ENCODE measurements at regions of chr3 and their contacts with region 1.

Region 1: DNA sequence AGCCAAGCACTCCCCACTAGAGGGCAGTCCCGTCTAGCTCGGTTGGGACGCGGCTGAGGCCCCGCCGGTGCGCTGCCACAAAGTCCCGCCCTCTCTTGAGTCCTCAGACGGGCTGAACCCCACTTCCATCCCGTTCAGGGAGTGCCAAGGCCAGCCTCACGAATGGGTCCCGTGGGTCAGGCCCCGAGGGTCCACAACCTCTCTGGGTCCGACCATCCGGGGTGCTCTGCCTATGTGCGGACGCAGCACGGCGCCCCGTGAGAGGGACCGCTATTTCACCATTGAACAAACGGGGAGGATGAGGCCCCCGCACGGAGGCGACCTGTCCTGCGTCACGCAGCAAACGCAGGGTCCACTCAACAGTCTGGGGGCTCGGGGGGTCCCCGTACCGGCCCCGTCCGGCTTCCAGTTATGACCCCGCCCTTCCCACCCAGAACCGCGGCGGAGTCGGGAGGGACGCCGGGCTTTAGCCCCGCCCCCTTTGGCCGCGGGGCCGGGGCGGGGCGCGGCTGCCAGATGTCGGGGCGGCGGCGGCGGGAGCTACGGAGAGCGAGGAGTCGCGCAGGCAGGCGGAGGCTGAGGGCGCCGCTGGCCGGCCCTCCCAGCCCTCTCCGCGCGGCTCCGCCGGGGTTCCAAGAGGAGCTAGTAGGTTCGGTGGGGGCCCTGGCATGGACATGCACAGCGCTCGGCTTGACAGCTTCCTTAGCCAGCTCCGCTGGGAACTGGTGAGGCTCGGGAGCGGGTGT is at the start of gene INKA1:
- DNase-seq: peak; percentile 77 to 89 (median 87)
- ATAC-seq: peak; percentile 93
- H3K4me3 ChIP-seq: peak within 1 kb of the TSS; percentile 89
- H3K4me3 Mint-ChIP-seq: peak within 1 kb of the TSS; percentile 82 to 95 (median 90)
- H3K27ac ChIP-seq: peak within 1 kb of the TSS; percentile 84
- H3K27ac Mint-ChIP-seq: peak within 1 kb of the TSS; percentile 80 to 96 (median 91)
- H3K4me1 ChIP-seq: peaks cover 11 to 41% of the 10 kb centered on the region in 2 donors
- H3K4me1 Mint-ChIP-seq: peaks cover 23 to 47% (median 41%) of the 10 kb centered on the region in 7 donors
- H3K27me3 ChIP-seq: no peaks in the 10 kb centered on the region
- H3K27me3 Mint-ChIP-seq: peaks cover 0 to 20% (median 0%) of the 10 kb centered on the region in 5 donors
- total RNA-seq, gene INKA1: 0.65 to 2.2 (median 1.8) TPM

Region 2: DNA sequence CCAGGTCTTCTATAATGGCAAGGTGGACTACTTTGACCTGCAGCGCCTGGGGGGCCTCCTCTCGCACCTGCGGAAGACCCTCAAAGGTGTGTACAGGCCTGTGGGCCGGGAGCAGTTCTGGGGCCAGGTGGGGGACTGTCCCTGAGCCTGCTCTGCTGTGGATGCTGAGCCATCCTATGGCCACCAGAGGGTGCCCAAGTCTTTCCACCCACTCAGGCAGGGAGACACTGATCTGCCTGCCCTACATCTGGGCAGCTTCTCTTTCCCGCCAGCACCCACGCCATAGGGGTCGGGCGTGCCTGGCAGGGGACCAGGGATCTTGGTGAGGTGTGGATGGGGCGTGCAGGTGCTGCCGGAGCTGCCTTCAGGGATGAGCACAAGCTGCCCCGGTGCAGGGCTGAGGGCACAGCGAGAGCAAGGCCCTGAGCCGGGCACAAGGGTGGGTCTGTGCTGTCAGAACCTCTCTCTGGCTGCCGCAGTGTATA is 99.4 kb before region 1 on chr3:
- CTCF ChIA-PET with region 1: interaction called, 3 read pairs
- POLR2A ChIA-PET with region 1: no interaction called
- intact Hi-C with region 1: loop called (anchors 1 kb)
- DNase-seq: peak; percentile 44 to 74 (median 65)
- ATAC-seq: peak; percentile 94
- H3K4me3 ChIP-seq: no peak overlapping the region
- H3K4me3 Mint-ChIP-seq: no peak overlapping the region
- H3K27ac ChIP-seq: no peak overlapping the region
- H3K27ac Mint-ChIP-seq: peak overlapping the region in 2 of 9 donors; percentile 8 to 52
- H3K4me1 ChIP-seq: no peaks in the 10 kb centered on the region
- H3K4me1 Mint-ChIP-seq: peaks cover 0 to 7% (median 0%) of the 10 kb centered on the region in 7 donors
- H3K27me3 ChIP-seq: no peaks in the 10 kb centered on the region
- H3K27me3 Mint-ChIP-seq: no peaks in the 10 kb centered on the region

Region 3: DNA sequence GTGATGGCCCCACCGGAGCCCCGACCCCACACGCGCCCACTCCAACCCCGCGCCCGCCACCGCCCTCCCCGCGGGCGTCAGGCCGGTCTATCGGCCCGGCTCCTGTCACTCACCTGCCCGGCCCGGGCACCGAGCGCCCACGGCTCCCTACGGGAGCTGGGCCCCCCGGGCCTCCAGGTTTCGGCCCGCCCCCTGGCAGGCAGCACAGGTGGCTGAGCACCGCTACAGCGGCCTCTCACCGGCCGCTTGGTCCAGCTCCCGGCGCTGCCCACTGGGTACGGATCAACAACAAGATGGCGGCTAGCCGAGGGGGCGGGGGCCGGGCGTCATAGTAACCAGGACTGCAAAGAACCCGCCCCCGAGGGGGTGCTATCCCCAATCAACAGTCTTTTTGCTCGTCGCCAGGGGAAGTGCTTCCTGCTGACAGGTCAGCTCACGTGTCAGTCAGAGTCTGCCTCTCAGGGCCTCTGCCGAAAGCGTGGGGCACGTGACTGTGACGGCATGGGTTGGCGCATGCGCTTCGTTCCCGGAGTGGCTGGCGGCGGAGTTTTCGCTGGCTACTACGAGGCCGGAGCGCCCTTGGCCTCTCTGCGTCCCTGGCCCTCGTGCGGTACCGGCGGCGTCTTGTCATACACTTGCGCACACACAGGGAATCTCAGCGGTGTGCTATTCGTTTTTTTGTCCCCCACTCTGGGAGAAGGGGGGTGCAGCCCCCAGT is 16.5 kb before region 1 on chr3 and contains the start of gene IP6K1:
- CTCF ChIA-PET with region 1: interaction called, 10 read pairs
- POLR2A ChIA-PET with region 1: interaction called, 25 read pairs
- intact Hi-C with region 1: loop called (anchors 1 kb)
- DNase-seq: peak; percentile 90 to 100 (median 99)
- ATAC-seq: peak; percentile 99
- H3K4me3 ChIP-seq: peak within 1 kb of the TSS; percentile 80
- H3K4me3 Mint-ChIP-seq: peak within 1 kb of the TSS; percentile 91 to 99 (median 94)
- H3K27ac ChIP-seq: peak within 1 kb of the TSS; percentile 95
- H3K27ac Mint-ChIP-seq: peak within 1 kb of the TSS; percentile 96 to 100 (median 99)
- H3K4me1 ChIP-seq: peaks cover 9 to 12% of the 10 kb centered on the region in 2 donors
- H3K4me1 Mint-ChIP-seq: peaks cover 15 to 50% (median 32%) of the 10 kb centered on the region in 7 donors
- H3K27me3 ChIP-seq: no peaks in the 10 kb centered on the region
- H3K27me3 Mint-ChIP-seq: peaks cover 0 to 6% (median 0%) of the 10 kb centered on the region in 5 donors
- total RNA-seq, gene IP6K1: 41.8 to 57.0 (median 47.3) TPM

Region 4: DNA sequence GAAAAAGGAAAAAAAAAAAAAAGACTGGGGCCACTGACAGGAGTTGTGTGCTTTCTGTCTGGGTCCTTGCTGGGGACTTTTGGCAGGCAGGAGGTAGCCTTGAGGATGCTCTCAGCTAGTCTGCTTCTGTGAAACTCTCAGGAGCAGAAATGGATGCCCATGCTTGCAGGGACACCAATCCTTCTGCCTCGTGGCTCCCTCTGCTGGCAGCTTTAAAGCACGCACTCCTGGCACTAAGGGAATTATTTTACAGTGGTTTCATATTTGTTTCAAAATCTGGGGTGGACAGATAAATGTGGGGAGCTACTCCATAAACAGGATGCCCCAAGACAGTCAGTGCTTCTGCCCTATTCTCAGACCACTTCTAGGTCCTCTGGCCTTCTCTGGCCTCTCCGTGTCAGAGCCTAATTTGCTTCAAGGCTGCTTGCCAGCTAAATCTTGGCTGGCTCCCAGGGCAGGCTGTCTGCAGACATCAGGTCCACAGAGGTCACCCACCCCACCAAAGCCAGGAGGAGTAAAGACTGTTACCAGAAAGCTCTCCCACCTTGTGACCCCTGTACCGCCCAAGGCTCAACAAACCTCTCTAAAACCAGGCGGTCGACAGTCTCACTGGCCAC is 36.4 kb after region 1 on chr3:
- CTCF ChIA-PET with region 1: interaction called, 181 read pairs
- POLR2A ChIA-PET with region 1: interaction called, 59 read pairs
- intact Hi-C with region 1: loop called (anchors 1 kb)
- DNase-seq: peak; percentile 64 to 84 (median 75)
- ATAC-seq: peak; percentile 97
- H3K4me3 ChIP-seq: no peak overlapping the region
- H3K4me3 Mint-ChIP-seq: no peak overlapping the region
- H3K27ac ChIP-seq: no peak overlapping the region
- H3K27ac Mint-ChIP-seq: peak overlapping the region in 1 of 9 donors; percentile 3
- H3K4me1 ChIP-seq: no peaks in the 10 kb centered on the region
- H3K4me1 Mint-ChIP-seq: peaks cover 0 to 9% (median 0%) of the 10 kb centered on the region in 7 donors
- H3K27me3 ChIP-seq: no peaks in the 10 kb centered on the region
- H3K27me3 Mint-ChIP-seq: no peaks in the 10 kb centered on the region

Region 5: GRCh38 chr3:49906004-49906743 is 103.3 kb after region 1 on chr3:
- CTCF ChIA-PET with region 1: interaction called, 7 read pairs
- POLR2A ChIA-PET with region 1: no interaction called
- intact Hi-C with region 1: loop called (anchors 1 kb)
- DNase-seq: peak; percentile 16 to 60 (median 39)
- ATAC-seq: peak; percentile 53
- H3K4me3 ChIP-seq: no peak overlapping the region
- H3K4me3 Mint-ChIP-seq: peak overlapping the region; percentile 39 to 79 (median 64)
- H3K27ac ChIP-seq: peak overlapping the region; percentile 24
- H3K27ac Mint-ChIP-seq: peak overlapping the region; percentile 63 to 91 (median 87)
- H3K4me1 ChIP-seq: peaks cover 15 to 26% of the 10 kb centered on the region in 2 donors
- H3K4me1 Mint-ChIP-seq: peaks cover 18 to 41% (median 27%) of the 10 kb centered on the region in 7 donors
- H3K27me3 ChIP-seq: no peaks in the 10 kb centered on the region
- H3K27me3 Mint-ChIP-seq: no peaks in the 10 kb centered on the region

Region 6: DNA sequence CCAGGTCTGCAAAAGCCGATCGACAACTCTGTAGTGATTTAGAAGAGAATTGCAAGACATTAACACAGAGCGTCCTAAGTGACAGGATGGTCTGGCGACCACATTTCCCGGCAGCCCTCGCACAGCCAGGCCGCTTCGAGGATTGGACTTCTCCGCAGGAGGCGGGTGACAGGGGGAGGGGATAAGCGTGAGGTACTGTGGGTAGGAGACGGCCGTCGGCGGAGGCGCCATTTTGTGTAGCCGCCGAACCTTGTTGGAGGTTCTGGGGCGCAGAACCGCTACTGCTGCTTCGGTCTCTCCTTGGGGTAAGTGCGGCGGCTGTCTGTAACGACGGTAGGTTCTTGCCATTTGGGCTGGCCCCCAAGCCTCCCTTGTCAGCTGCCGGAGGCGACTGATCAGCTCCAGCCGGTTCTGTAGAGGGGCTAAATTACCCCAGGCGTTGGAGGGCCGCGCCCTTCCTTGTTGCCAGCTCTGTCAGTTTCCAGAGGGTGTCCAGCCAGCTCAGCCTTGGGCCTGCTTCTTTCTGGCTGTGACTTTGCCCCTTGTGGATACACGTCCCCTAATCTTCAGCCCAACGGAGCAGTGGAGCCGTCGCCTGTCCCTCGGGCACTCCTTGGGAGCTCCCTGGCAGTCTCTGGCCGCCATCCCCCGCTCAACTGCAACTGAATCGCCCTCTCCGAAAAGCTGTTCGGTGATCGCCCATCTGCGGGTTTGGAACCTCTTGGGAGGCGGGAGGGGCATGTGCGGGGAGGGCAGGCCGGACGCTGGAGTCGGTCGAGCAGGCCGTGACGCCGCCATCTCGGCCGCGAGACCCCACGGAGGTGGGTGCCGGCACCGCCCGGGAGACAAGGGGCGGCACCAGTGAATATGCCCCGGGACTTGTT is 286.1 kb after region 1 on chr3 and contains the start of gene RBM5:
- CTCF ChIA-PET with region 1: no interaction called
- POLR2A ChIA-PET with region 1: no interaction called
- intact Hi-C with region 1: loop called in 1 of 2 experiments (anchors 2 kb)
- DNase-seq: peak; percentile 71 to 91 (median 89)
- ATAC-seq: peak; percentile 100
- H3K4me3 ChIP-seq: peak within 1 kb of the TSS; percentile 88
- H3K4me3 Mint-ChIP-seq: peak within 1 kb of the TSS; percentile 94 to 98 (median 96)
- H3K27ac ChIP-seq: peak within 1 kb of the TSS; percentile 98
- H3K27ac Mint-ChIP-seq: peak within 1 kb of the TSS; percentile 94 to 99 (median 97)
- H3K4me1 ChIP-seq: peaks cover 16 to 23% of the 10 kb centered on the region in 2 donors
- H3K4me1 Mint-ChIP-seq: peaks cover 24 to 36% (median 32%) of the 10 kb centered on the region in 7 donors
- H3K27me3 ChIP-seq: no peaks in the 10 kb centered on the region
- H3K27me3 Mint-ChIP-seq: no peaks in the 10 kb centered on the region
- total RNA-seq, gene RBM5: 223 to 420 (median 342) TPM

Measured in naive thymus-derived CD4-positive, alpha-beta T cell (primary cell).